ENCODE measurements at regions of chr4 and their contacts with region 1.

Region 1: DNA sequence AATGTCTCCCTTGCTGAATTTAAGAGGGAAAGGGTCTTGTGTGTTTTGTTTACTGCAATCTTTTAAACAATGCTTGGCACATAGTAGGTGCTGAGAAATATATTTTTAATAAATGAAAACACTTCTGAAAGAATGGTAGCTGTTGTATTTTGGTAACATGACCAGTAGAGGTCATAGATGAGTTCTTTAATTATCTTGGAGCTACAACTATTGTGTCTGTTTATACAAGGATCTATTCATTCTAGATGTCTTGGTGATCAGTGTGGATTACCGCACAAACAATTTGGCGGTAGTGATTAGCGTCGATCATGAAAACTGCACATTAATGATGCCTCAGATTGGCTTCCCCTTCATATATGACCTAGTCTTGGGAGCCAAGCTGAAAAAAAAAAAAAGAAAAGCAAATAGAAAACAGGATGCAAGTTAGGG is 21.4 kb upstream of the SCRG1 start:
- DNase-seq: no peak
- ATAC-seq: no peak
- H3K4me3 Mint-ChIP-seq: no peak overlapping the region
- H3K27ac Mint-ChIP-seq: no peak overlapping the region
- H3K4me1 Mint-ChIP-seq: peaks cover 9% of the 10 kb centered on the region
- H3K27me3 Mint-ChIP-seq: peaks cover 9% of the 10 kb centered on the region

Region 2: DNA sequence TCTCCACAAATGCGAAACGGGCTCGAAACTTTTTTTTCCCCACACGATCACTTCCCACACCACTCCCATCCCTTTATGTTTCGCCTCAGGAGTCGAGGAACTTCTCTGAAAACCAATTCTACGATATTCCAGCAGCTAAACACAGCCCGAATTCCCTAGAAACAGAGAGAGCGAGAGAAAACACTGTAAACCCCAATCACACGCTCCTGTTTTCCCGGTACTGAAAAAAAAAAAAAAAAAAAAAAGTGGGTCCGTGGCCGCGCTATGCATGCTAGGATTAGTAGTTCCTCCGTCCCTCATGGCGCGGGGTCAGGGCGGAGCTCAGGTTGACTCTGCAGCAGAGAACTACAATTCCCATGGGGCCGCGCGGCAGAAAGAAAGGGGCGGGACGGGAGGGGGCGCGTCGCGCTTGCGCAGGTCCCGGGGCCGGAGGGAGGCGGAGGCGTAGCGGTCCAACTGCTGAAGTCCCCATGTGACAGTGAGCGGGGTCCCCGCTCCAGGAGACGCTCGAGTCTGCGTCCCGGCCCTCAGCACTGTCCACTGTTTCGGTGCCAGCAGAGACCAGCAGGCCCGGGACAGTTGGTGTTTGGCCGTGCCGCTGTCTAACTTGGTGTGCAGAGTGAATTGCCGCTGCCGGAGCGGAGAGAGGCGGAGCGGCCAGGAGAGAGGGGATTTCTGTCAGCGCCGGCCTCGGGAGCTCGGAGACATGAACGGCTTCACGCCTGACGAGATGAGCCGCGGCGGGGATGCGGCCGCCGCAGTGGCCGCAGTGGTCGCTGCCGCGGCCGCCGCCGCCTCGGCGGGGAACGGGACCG is 49.7 kb before region 1 on chr4 and contains the start of gene SAP30:
- CTCF ChIA-PET with region 1: interaction called, 12 read pairs
- POLR2A ChIA-PET with region 1: no interaction called
- DNase-seq: peak; percentile 98
- ATAC-seq: peak; percentile 82
- H3K4me3 Mint-ChIP-seq: peak within 1 kb of the TSS; percentile 100
- H3K27ac Mint-ChIP-seq: peak within 1 kb of the TSS; percentile 96
- H3K4me1 Mint-ChIP-seq: peaks cover 33% of the 10 kb centered on the region
- H3K27me3 Mint-ChIP-seq: no peaks in the 10 kb centered on the region
- total RNA-seq, gene SAP30: 19.7 to 21.0 TPM

Region 3: DNA sequence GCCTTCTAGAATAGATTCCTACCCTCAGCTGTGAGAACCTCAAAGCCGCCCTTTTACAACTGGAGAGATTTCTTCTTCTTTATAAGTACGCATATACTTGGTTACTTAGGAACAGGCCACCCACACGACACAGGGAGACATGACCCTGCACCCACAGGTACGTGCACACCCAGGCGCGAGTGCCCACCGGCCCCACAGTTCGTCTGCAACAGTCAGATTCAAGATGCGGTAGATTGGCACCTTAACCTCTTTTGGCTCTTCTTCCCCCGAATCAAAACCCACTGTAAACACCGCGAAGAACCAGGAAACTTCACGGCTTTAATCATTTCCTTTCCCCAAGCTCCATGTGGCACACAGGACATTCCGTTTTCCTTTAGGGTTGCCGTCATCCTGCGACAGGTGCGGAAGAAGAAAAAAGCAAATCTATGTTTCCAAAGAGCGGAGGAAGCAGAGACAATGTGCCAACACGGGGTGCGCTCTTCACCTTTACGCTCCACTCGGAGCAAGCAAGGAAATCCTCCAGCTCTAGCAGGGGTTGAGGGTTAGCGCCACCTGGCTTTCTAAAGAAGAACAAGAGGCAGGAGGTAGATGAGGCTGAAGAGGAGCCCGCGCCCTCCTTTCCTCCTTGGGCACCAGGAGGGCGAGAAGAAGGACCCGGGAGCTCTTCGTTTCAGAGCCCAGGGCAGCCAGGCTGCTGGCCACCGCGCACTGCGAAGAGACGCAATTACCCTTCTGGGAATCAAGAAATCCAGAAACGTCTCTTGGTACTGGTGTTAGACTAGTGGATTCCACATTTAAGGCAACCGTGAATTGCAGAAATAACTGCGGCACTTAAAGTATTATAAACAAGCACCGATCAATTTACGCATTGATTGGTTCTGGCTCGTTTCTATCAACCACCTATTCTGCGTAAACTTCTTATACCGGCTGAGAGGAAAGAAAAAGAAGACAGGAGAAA is 74.0 kb after region 1 on chr4:
- CTCF ChIA-PET with region 1: interaction called, 45 read pairs
- POLR2A ChIA-PET with region 1: no interaction called
- DNase-seq: peak; percentile 76
- ATAC-seq: peak; percentile 98
- H3K4me3 Mint-ChIP-seq: peak overlapping the region; percentile 72
- H3K27ac Mint-ChIP-seq: no peak overlapping the region
- H3K4me1 Mint-ChIP-seq: peaks cover 25% of the 10 kb centered on the region
- H3K27me3 Mint-ChIP-seq: peaks cover 29% of the 10 kb centered on the region